Astrocyte of the cerebellum (primary cell): ENCODE measurements at regions of chr9 and their contacts with region 1.

Region 1: GRCh38 chr9:84261082-84261746 is 79.3 kb downstream of the SLC28A3 start:
- DNase-seq: peak; percentile 55
- H3K4me3 ChIP-seq: no peak overlapping the region
- CTCF ChIP-seq: peak; percentile 89

Region 2: GRCh38 chr9:83937911-83938323 is 323.3 kb before region 1 on chr9:
- in situ Hi-C with region 1: loop called (anchors 25 kb)
- DNase-seq: peak; percentile 39
- H3K4me3 ChIP-seq: no peak overlapping the region
- CTCF ChIP-seq: peak; percentile 56

Region 3: DNA sequence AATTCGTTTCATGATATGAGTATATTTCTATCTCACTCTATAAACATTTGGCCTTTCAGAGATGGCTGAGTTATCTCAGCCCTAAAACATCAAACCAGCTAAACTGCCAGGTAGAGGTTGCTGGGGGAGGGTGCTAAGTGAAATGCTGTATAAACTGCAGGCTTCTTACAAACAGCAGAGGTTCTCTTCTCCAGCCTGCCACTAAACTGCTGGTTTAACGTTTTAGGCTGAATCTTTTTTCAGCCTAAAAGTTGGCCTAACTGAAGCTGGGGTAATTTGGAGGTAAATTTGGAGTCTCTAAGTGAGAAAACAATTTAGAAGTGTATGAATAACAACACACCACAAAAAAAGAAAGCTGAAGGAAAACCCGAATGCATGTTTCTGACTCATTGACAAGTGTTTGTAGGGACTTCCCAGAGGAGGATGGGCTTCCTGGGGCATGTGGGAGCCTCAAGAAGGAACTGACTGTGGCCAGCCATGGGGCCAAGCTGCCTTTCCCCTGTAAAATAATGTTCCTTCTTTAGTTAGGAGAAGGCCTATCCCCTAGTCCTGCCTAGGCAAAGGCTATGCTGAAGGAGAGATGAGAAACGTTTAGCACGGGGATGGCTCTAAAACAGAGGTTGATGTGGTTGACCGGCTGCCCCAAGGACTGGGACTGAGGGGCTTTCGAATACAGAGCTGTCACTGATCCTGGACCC is 35.1 kb after region 1 on chr9:
- in situ Hi-C with region 1: no loop called
- DNase-seq: no peak
- H3K4me3 ChIP-seq: no peak overlapping the region
- CTCF ChIP-seq: no peak